Adrenal gland (tissue), 19 donors: ENCODE measurements at regions of chr1 and their contacts with region 1.

Region 1: GRCh38 chr1:117059678-117060440 is at the start of gene TTF2:
- DNase-seq: peak; percentile 93 to 98 (median 97)
- H3K4me3 ChIP-seq: peak within 1 kb of the TSS; percentile 19 to 99 (median 72)
- H3K27ac ChIP-seq: peak within 1 kb of the TSS in 4 of 5 donors; percentile 52 to 81 (median 70)
- H3K4me1 ChIP-seq: peaks cover 0 to 14% of the 10 kb centered on the region in 2 donors
- H3K27me3 ChIP-seq: no peaks in the 10 kb centered on the region
- CTCF ChIP-seq: peak; percentile 14 to 53 (median 32)
- POLR2A ChIP-seq: peak in 1 of 2 donors; percentile 61
- total RNA-seq, gene TTF2: 10.3 to 28.2 (median 21.3) TPM

Region 2: DNA sequence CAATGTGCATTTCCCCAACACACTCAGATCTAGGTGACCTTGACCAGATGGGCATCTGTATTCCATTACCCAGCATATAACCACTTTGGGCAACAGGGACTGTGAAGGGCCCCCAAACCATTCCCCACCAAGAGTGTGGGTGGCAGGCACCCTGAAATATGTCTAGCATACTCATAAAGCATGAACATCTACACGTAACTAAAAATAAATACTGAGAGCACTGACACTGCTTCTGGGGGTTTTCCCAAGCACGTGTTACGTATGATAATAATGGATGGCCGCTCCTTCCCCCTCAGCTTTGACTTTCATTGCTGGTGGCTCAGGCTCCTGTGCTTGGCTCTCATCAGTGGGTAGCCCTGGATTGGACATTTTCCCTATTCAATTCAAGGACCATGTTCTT is 431.4 kb before region 1 on chr1:
- intact Hi-C with region 1: no loop called
- DNase-seq: no peak
- H3K4me3 ChIP-seq: no peak overlapping the region
- H3K27ac ChIP-seq: no peak overlapping the region
- H3K4me1 ChIP-seq: no peaks in the 10 kb centered on the region
- H3K27me3 ChIP-seq: no peaks in the 10 kb centered on the region
- CTCF ChIP-seq: no peak
- POLR2A ChIP-seq: no peak

Region 3: GRCh38 chr1:116737020-116737854 is 322.6 kb before region 1 on chr1:
- intact Hi-C with region 1: loop called (anchors 5 to 10 kb)
- DNase-seq: peak; percentile 38 to 72 (median 49)
- H3K4me3 ChIP-seq: no peak overlapping the region
- H3K27ac ChIP-seq: no peak overlapping the region
- H3K4me1 ChIP-seq: no peaks in the 10 kb centered on the region
- H3K27me3 ChIP-seq: no peaks in the 10 kb centered on the region
- CTCF ChIP-seq: peak; percentile 54 to 80 (median 75)
- POLR2A ChIP-seq: no peak

Region 4: DNA sequence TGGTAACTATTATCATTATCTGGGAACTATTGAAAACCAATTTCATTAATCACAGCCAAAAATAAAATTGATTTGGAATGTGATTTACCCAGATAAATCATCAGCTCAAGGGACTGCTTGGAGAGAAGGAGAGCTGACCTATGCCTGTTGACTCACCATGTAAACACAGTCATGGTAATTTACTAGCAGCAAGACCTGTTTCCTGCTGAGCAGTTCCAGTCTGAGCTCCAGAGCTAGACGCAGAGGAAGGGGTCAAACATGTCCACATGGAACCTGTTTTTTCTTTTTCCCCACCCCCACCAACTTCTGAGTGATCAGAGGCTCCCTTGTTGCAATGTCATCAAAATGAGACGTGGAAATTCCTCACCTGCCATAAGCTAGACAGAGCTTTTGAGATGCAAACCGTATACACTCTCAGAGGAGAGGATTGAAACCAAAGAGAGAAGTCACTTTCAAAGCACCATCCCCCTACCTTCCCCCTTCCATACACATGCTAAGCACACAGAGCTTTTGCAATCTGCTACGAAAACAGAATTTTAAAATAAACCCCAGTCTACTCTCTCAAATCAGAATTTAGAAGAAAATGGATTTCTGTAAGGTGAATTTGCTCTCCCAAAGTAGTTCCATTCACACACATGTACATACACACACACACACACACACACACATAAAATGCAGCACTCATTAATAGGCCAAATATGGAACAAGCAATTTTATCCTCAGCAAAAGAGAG is 206.0 kb before region 1 on chr1:
- intact Hi-C with region 1: loop called (anchors 10 kb)
- DNase-seq: peak in 4 of 7 donors; percentile 22 to 36 (median 23)
- H3K4me3 ChIP-seq: no peak overlapping the region
- H3K27ac ChIP-seq: no peak overlapping the region
- H3K4me1 ChIP-seq: peaks cover 20% of the 10 kb centered on the region in 2 donors
- H3K27me3 ChIP-seq: no peaks in the 10 kb centered on the region
- CTCF ChIP-seq: no peak
- POLR2A ChIP-seq: no peak

Region 5: GRCh38 chr1:116909510-116910378 is 150.1 kb before region 1 on chr1 and contains the start of gene PTGFRN:
- intact Hi-C with region 1: loop called in 1 of 2 experiments (anchors 10 kb)
- DNase-seq: peak; percentile 61 to 79 (median 75)
- H3K4me3 ChIP-seq: peak within 1 kb of the TSS; percentile 11 to 75 (median 40)
- H3K27ac ChIP-seq: peak within 1 kb of the TSS; percentile 26 to 90 (median 84)
- H3K4me1 ChIP-seq: peaks cover 19 to 46% of the 10 kb centered on the region in 2 donors
- H3K27me3 ChIP-seq: no peaks in the 10 kb centered on the region
- CTCF ChIP-seq: peak in 1 of 6 experiments; percentile 0
- POLR2A ChIP-seq: peak; percentile 42 to 78
- total RNA-seq, gene PTGFRN: 63.8 to 173 (median 72.1) TPM

Region 6: GRCh38 chr1:117250061-117250606 is 190.3 kb after region 1 on chr1:
- intact Hi-C with region 1: no loop called
- DNase-seq: no peak
- H3K4me3 ChIP-seq: no peak overlapping the region
- H3K27ac ChIP-seq: no peak overlapping the region
- H3K4me1 ChIP-seq: no peaks in the 10 kb centered on the region
- H3K27me3 ChIP-seq: no peaks in the 10 kb centered on the region
- CTCF ChIP-seq: no peak
- POLR2A ChIP-seq: no peak

Region 7: DNA sequence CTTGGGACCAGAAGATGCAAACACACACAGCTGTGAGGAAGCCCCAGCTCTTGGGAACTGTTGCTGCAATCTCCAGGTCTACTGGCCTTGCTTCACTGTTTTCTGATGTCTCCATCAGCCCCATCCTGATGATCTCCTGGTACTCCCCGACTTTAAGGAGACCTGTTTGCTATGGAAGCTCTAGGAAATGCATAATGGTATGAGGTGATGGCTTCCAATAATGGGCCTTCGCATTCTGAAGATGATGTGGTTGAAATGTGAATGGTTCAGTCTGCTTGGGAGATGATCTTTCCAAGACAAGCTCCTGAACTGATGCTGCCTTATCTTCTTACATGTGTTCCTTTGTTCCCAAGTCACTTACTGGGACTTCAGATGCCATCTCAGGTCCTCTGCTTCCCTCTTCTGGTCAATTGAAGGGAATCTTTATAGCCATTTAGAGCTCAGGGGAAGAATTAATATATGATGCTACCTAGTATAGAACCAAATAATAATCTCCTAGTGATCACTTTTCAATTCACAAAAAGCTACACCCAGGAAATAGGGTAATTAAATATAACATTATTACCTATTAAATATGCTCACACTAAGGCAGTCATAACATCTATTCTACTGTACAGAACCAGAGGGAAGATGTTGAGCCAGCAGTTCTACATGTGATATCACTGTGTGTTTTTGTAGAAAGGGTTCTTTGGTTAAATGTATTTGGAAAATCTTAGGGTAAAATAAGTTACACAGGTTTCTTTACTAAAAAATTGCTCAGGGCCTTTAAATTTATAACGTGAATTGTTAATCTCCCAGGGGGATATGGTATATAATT is 224.7 kb after region 1 on chr1:
- intact Hi-C with region 1: loop called (anchors 5 to 10 kb)
- DNase-seq: peak in 3 of 7 donors; percentile 11 to 23 (median 21)
- H3K4me3 ChIP-seq: no peak overlapping the region
- H3K27ac ChIP-seq: no peak overlapping the region
- H3K4me1 ChIP-seq: no peaks in the 10 kb centered on the region
- H3K27me3 ChIP-seq: no peaks in the 10 kb centered on the region
- CTCF ChIP-seq: peak in 5 of 6 experiments; percentile 46 to 64 (median 58)
- POLR2A ChIP-seq: no peak